ENCODE measurements at regions of chr2 and their contacts with region 1.

Region 1: GRCh38 chr2:148874868-148875341 is at the start of gene KIF5C:
- DNase-seq: peak; percentile 94
- H3K4me3 Mint-ChIP-seq: peak within 1 kb of the TSS; percentile 91
- H3K27ac Mint-ChIP-seq: peak within 1 kb of the TSS; percentile 86
- H3K4me1 Mint-ChIP-seq: peaks cover 14% of the 10 kb centered on the region
- H3K27me3 Mint-ChIP-seq: peaks cover 26% of the 10 kb centered on the region
- total RNA-seq, gene KIF5C: 16.9 and 20.0 TPM in 2 replicates

Region 2: DNA sequence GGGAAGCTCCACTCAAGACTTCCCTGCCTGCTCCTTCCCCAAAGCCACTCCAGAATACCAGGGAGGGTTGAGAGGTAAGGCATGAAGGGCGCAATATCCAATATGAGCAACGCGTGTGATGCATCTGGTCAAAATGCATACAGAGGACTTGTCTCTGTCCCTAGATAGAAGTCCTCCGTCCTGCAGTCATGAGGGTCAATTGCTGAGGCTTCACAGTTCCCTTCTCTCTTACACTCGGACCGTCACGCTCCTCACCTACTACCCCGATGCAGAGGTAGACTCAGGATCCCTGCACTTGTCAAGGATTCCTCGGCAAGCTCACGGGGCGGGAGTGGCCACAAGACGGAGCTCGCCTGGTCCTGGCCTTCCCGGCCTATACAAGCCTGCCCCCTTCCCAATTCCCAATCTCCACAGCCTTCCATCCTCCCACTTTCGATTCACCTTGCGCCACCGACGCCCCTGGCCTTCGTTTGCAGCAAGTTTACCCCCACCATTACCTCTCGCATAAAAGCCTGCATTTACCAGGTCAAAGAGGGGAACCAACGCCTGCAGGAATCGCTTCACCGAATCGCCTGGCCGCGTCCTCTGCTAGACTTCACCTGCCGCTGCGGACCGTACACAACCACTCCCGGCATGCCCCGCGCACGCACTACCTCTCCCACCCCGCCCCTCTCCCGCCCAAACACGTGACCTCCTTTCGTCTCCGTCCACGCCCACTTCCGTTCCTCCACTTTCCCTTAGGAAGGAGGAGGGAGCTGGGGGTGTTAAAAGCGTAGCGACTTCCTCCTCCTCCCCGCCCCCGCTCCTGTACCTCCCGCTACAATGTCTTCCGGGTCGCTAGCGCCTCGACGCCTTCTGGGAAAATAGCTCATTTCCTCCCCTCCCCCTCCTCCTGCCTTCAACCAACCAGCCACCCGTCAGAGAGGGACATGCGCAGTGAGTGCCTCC is 854.5 kb before region 1 on chr2 and contains the start of gene ORC4:
- intact Hi-C with region 1: loop called (anchors 1 kb)
- DNase-seq: peak; percentile 98
- H3K4me3 Mint-ChIP-seq: peak within 1 kb of the TSS; percentile 94
- H3K27ac Mint-ChIP-seq: peak within 1 kb of the TSS; percentile 93
- H3K4me1 Mint-ChIP-seq: peaks cover 45% of the 10 kb centered on the region
- H3K27me3 Mint-ChIP-seq: no peaks in the 10 kb centered on the region
- total RNA-seq, gene ORC4: 27.0 and 36.2 TPM in 2 replicates

Region 3: DNA sequence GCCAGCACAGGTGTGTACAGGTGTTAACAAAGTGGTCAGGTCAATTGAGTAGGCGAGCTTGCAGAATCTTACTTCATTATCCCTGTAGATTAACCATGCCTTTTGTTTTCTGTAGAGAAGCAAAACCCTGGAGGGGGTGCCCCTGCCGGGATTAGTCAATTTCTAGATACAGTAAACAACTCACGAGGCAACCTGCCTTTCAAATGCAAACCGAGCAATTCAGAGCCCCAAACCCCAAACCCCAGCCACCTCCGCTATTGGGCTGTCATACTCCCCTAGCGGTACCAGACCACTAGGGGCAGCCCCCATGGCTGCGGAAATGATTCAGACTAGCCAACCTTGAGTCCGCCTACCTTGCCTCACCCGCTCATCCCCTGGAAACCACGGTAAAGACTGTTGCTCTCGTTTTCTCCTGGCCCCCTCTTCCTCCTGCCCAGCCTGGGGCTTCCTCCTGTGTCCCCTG is 61.3 kb before region 1 on chr2:
- intact Hi-C with region 1: loop called (anchors 5 kb)
- DNase-seq: peak; percentile 85
- H3K4me3 Mint-ChIP-seq: no peak overlapping the region
- H3K27ac Mint-ChIP-seq: peak overlapping the region; percentile 78
- H3K4me1 Mint-ChIP-seq: peaks cover 17% of the 10 kb centered on the region
- H3K27me3 Mint-ChIP-seq: peaks cover 24% of the 10 kb centered on the region

Region 4: GRCh38 chr2:148829618-148830017 is 45.3 kb before region 1 on chr2:
- intact Hi-C with region 1: no loop called
- DNase-seq: no peak
- H3K4me3 Mint-ChIP-seq: no peak overlapping the region
- H3K27ac Mint-ChIP-seq: no peak overlapping the region
- H3K4me1 Mint-ChIP-seq: no peaks in the 10 kb centered on the region
- H3K27me3 Mint-ChIP-seq: peaks cover 15% of the 10 kb centered on the region

Region 5: GRCh38 chr2:148926291-148926961 is 51.5 kb after region 1 on chr2:
- intact Hi-C with region 1: loop called (anchors 2 kb)
- DNase-seq: peak; percentile 88
- H3K4me3 Mint-ChIP-seq: peak overlapping the region; percentile 88
- H3K27ac Mint-ChIP-seq: peak overlapping the region; percentile 88
- H3K4me1 Mint-ChIP-seq: peaks cover 21% of the 10 kb centered on the region
- H3K27me3 Mint-ChIP-seq: no peaks in the 10 kb centered on the region